A549 (cell line): ENCODE measurements at regions of chr15 and their contacts with region 1.

Region 1: GRCh38 chr15:65275728-65276126 is 11.0 kb downstream of the PARP16 start:
- DNase-seq: peak; percentile 74
- ATAC-seq: peak; percentile 75 to 78
- H3K4me3 ChIP-seq: no peak overlapping the region
- H3K27ac ChIP-seq: peak overlapping the region; percentile 59 to 76
- H3K4me1 ChIP-seq: peaks cover 20% of the 10 kb centered on the region
- CTCF ChIP-seq: no peak
- EP300 ChIP-seq: no peak
- POLR2A ChIP-seq: no peak
- RAD21 ChIP-seq: no peak

Region 2: DNA sequence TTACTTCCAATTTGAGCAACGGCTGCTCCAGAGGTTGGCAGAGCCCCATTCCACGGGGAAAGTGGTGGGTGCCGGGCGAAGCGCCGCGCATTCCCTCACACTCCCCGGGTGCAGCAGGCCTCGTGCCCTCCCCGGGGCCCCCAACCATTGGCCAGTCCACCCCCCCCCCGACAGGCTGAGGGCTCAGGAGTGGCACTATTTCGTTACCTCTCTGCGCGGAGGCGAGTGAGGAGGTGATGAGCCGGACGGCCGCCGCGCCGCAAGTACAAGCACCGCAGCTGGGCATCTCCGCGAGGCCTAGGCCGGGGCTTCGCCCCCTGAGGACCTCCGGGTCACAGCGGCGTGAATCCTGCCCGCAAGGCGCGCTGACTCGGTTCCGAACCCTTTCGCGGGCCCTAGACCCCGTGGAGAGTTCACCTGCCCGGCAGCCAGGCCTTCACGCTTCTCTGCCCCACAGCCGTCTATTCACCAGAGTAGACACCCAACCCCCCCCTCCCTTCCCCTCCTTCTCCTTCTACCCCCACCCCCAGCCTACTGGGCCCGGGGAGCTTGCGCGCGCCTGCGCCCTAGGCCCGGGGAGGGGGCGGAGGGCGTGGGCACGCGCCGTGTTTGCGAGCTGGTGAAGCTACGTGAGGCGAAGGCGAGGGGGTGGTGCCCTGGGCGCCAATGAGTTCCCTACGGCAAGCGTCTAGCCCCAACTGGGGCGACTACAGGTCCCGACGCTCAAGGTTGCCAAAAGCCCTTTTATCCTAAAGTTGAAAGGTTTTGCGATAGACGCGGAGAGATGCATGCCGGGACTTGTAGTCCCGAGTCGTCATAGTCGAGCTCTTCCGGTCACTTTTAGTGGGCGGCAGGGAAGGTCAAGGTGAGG is 90.6 kb before region 1 on chr15 and contains the start of gene CLPX:
- CTCF ChIA-PET with region 1: interaction called, 408 read pairs
- POLR2A ChIA-PET with region 1: interaction called, 16 read pairs
- DNase-seq: peak; percentile 93 to 98
- ATAC-seq: peak; percentile 86 to 90
- H3K4me3 ChIP-seq: peak within 1 kb of the TSS; percentile 72
- H3K27ac ChIP-seq: peak within 1 kb of the TSS; percentile 93 to 95
- H3K4me1 ChIP-seq: peaks cover 34% of the 10 kb centered on the region
- CTCF ChIP-seq: no peak
- EP300 ChIP-seq: no peak
- POLR2A ChIP-seq: peak; percentile 58
- RAD21 ChIP-seq: no peak; a peak in 1 of 5 replicates
- polyA plus RNA-seq, gene CLPX: 65.1 and 113 TPM in 2 replicates

Region 3: GRCh38 chr15:65212097-65212496 is 63.6 kb before region 1 on chr15:
- CTCF ChIA-PET with region 1: interaction called, 35 read pairs
- POLR2A ChIA-PET with region 1: no interaction called
- DNase-seq: peak; percentile 48 to 54
- ATAC-seq: peak; percentile 44 to 78; a peak in 3 of 6 replicates
- H3K4me3 ChIP-seq: no peak overlapping the region
- H3K27ac ChIP-seq: no peak overlapping the region
- H3K4me1 ChIP-seq: peaks cover 7% of the 10 kb centered on the region; the same call in 1 of the 3 replicates
- CTCF ChIP-seq: peak; percentile 48
- EP300 ChIP-seq: no peak
- POLR2A ChIP-seq: no peak
- RAD21 ChIP-seq: peak in 1 of 2 experiments; percentile 40; a peak in 2 of 5 replicates

Region 4: DNA sequence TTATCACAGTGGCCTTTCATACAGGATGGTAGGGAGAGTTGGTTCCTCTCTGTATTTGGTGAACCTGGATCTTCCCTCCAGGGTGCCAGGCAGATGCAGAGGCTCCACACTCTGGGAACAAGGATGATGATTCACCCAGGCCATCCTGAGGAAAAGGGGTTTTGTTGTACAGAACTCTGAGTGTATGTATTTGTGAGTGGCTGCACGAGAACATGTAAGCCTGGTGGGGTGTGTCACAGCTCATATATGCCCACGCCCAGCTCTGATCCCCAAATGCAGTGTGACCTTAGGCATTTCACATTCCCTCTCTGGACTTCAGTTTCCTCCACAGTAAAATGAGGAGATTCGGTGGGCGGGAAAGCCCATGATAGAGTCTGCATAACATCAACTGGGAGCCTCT is 52.8 kb before region 1 on chr15:
- CTCF ChIA-PET with region 1: interaction called, 42 read pairs
- POLR2A ChIA-PET with region 1: no interaction called
- DNase-seq: no peak
- ATAC-seq: peak; percentile 19 to 27; a peak in 3 of 6 replicates
- H3K4me3 ChIP-seq: no peak overlapping the region
- H3K27ac ChIP-seq: no peak overlapping the region; a peak in 2 of 6 replicates
- H3K4me1 ChIP-seq: peaks cover 25% of the 10 kb centered on the region
- CTCF ChIP-seq: no peak
- EP300 ChIP-seq: no peak
- POLR2A ChIP-seq: no peak
- RAD21 ChIP-seq: no peak

Region 5: DNA sequence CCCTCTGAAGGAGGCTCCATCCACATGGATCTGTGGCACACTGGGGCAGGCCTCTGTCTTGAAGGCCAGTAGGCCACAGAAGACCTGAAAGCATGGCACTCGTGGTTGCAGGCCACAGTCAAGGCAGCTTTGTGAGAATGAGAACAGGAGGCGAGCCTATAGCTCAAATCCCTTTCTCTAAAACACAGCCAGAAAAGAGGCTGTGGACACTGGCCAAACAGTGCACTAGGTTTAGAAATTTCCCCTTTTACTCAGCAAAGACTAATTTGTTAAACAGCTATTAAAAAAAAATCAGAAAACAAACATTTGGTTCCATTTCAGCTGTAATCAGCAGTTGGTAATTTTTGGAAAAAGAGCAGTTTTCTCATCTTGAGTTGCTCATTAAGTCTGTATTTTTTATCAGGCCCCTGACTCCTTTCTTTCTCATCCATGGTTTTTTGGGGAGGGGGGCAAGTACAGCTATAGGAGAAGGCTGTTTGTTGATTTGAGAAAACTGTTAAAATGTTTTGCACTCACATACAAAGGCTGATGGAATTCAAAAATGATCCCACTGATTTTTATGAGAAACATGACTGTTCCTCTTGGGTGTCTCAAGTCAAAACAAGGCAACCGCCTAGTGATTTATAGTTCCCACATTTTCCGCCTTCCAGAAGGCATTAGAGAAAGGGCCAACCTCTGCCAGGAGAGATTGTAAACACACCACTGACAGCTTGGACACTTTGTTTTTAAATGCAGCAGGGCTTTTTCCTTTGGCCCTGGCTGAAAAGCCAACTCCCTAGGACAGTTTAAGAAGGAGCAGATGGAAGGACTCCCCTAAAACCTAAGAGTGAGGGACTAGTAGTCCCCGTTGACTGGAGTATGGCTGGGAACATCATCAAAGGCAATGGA is 17.1 kb before region 1 on chr15:
- CTCF ChIA-PET with region 1: interaction called, 64 read pairs
- POLR2A ChIA-PET with region 1: no interaction called
- DNase-seq: no peak
- ATAC-seq: no peak
- H3K4me3 ChIP-seq: no peak overlapping the region
- H3K27ac ChIP-seq: no peak overlapping the region
- H3K4me1 ChIP-seq: no peaks in the 10 kb centered on the region
- CTCF ChIP-seq: no peak
- EP300 ChIP-seq: no peak
- POLR2A ChIP-seq: no peak
- RAD21 ChIP-seq: no peak

Region 6: DNA sequence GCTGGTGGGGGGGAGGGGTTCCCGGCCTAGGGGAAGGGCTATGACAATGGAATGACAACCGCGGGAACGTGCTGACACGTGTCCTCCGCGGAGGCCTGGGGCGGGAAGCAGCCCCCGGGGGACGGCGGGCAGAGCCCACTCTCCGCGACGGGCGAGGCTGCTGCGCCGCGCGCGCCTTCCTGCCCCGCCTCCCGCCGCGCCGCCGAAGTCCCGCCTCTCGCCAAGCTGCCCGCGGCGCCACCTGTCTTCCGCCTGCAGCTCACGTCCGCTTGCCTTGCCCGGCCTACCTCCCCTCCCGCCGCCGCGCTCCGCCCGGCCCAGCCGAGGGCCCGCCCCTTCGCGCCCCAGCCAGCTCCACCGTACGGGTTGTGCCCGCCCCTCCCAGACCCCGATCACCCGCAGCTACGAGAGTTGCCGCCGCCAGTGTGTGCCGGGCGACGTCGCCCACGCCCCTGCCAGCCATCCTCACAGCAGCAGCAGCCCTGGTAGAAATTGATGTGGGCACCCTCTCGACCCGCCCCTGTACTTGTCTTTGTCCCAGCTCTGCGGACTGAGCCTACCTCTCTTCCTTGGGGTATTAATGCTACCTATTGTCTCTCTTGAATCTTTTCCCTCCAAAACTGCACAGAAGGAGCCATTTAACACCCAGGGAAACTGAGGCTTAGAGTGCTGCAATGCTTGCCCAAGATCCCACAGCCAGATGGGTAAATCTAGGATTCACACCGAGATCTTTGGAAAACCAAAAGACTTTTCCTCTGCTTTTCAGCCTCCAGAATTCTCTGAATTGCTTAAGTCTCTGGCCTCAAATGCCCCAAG is 11.2 kb after region 1 on chr15 and contains the start of gene PARP16:
- CTCF ChIA-PET with region 1: interaction called, 127 read pairs
- POLR2A ChIA-PET with region 1: interaction called, 13 read pairs
- DNase-seq: peak; percentile 83 to 94
- ATAC-seq: peak; percentile 94 to 95
- H3K4me3 ChIP-seq: peak within 1 kb of the TSS; percentile 65
- H3K27ac ChIP-seq: peak within 1 kb of the TSS; percentile 85 to 91
- H3K4me1 ChIP-seq: peaks cover 14% of the 10 kb centered on the region
- CTCF ChIP-seq: peak; percentile 36
- EP300 ChIP-seq: no peak
- POLR2A ChIP-seq: peak; percentile 70
- RAD21 ChIP-seq: peak in 1 of 2 experiments; percentile 22; a peak in 1 of 5 replicates
- polyA plus RNA-seq, gene PARP16: 9.8 and 11.2 TPM in 2 replicates

Region 7: GRCh38 chr15:65304389-65305144 is 28.8 kb after region 1 on chr15 and contains the start of gene RNU5B-1:
- CTCF ChIA-PET with region 1: interaction called, 11 read pairs
- POLR2A ChIA-PET with region 1: interaction called, 10 read pairs
- DNase-seq: peak; percentile 84 to 98
- ATAC-seq: peak; percentile 83 to 86
- H3K4me3 ChIP-seq: peak within 1 kb of the TSS; percentile 56
- H3K27ac ChIP-seq: peak within 1 kb of the TSS; percentile 85 to 91
- H3K4me1 ChIP-seq: peaks cover 23% of the 10 kb centered on the region
- CTCF ChIP-seq: no peak; the same call in 1 of the 3 replicates
- EP300 ChIP-seq: peak in 1 of 2 experiments; percentile 44; a peak in 1 of 5 replicates
- POLR2A ChIP-seq: peak; percentile 100
- RAD21 ChIP-seq: 0 out of 5 replicates have a peak, but pooled peaks of 1 of the 2 experiments have one; percentile 13
- polyA plus RNA-seq, gene RNU5B-1: not detected in 2 replicates